ENCODE measurements at regions of chr16 and their contacts with region 1.

Region 1: GRCh38 chr16:67741118-67741517 is 22.0 kb upstream of the GFOD2 start:
- DNase-seq: no peak
- H3K4me3 ChIP-seq: no peak overlapping the region
- H3K27ac ChIP-seq: no peak overlapping the region
- H3K4me1 ChIP-seq: no peaks in the 10 kb centered on the region
- H3K27me3 ChIP-seq: no peaks in the 10 kb centered on the region
- CTCF ChIP-seq: no peak
- POLR2A ChIP-seq: no peak

Region 2: DNA sequence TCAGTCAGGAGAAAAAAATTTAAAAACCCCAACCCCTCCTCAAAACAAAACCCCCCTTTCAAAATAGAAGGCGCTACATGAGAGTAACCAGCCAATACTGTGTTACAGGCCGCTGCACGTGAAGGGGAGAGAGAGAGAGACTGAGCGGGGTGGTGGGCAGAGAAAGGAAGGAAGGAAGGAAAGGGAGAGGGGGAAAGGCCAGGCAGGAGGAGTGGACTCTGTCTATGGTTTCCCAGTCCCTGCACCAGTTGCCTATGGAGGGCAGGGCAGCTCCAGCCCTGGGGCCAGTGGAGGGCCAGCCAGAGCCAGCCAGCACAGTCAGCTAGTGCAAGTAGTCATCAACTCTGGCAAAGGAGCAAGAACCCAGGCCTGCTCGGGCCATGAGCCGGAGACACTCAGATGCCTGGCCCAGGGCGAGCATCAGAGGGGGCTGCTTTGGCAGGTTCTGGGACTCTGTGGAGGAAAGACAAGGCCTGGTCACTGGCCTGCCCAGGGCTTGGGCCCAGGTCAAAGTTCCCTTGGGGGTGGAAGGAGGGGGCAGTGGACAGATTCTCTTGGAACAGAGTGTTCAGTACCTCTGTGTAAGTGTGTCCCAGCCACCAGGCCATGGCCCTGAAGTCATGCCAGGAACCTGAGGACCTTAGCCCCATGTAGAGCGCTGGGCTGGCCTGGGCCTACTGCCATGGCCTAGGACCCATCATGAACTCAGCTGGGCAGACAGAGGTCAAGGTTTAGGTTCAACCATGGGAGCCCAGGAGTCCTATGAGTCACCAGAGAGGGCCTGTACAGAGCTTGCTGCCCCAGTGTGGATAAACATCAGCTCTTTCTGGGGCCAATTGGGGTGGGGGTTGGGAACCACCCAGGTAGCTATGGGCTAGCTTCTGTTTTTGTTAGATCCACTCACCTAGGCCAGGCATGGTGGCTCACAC is 14.7 kb before region 1 on chr16:
- CTCF ChIA-PET with region 1: interaction called, 10 read pairs
- POLR2A ChIA-PET with region 1: no interaction called
- dilution Hi-C with region 1: no loop called
- intact Hi-C with region 1: no loop called
- DNase-seq: peak; percentile 30
- H3K4me3 ChIP-seq: no peak overlapping the region
- H3K27ac ChIP-seq: no peak overlapping the region
- H3K4me1 ChIP-seq: no peaks in the 10 kb centered on the region
- H3K27me3 ChIP-seq: no peaks in the 10 kb centered on the region
- CTCF ChIP-seq: no peak
- POLR2A ChIP-seq: no peak

Measured in endothelial cell of umbilical vein (primary cell).